Activated CD4-positive, alpha-beta T cell treated with anti-CD3 and anti-CD28 coated beads, Interleukin-2, amount 10 ng/mL, durations not matched to agents 24 days and 14 days (primary cell): ENCODE measurements at regions of chr20 and their contacts with region 1.

Region 1: DNA sequence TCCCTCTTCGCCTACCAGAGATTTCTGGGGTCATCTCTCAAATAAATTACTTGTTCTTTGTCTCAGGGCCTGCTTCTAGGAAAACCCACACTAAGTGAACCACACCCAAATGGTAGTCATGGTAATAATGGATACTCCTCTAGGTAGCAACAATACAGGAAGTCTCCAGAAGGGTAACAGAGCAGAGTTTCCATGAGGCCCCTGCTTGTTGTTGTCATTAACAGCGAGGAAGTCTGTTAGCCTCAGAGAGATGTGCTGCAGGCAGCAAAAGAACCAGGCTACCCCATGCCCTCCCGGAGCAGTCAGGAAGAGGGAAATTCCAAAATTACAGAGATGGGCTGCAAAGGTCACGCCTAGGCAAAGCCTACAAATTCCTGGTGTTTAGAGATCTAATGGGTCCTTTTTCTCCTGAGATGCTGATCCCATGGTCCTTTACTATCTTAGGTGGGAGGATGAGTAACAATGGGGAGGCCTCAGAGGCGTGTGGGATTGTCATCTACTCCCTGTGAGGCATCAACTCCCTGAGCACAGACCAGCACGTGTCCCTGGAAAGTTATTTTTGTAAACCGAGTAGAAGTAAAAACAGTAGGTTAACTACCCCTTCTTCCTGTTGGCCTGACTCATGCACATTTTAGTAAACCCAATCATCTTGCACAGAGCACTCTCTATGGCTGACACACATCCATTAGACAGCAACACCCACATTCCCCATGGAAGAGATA is 10.1 kb downstream of the ISM1 start:
- DNase-seq: peak; percentile 90
- H3K4me3 Mint-ChIP-seq: peak overlapping the region; percentile 25
- H3K27ac Mint-ChIP-seq: peak overlapping the region; percentile 94
- H3K4me1 Mint-ChIP-seq: peaks cover 37% of the 10 kb centered on the region
- H3K27me3 Mint-ChIP-seq: peaks cover 5% of the 10 kb centered on the region

Region 2: GRCh38 chr20:13243826-13244376 is 12.7 kb after region 1 on chr20:
- intact Hi-C with region 1: loop called (anchors 1 kb)
- DNase-seq: no peak
- H3K4me3 Mint-ChIP-seq: no peak overlapping the region
- H3K27ac Mint-ChIP-seq: no peak overlapping the region
- H3K4me1 Mint-ChIP-seq: peaks cover 33% of the 10 kb centered on the region
- H3K27me3 Mint-ChIP-seq: no peaks in the 10 kb centered on the region

Region 3: GRCh38 chr20:13312300-13312699 is 81.1 kb after region 1 on chr20:
- intact Hi-C with region 1: loop called (anchors 5 kb)
- DNase-seq: no peak
- H3K4me3 Mint-ChIP-seq: no peak overlapping the region
- H3K27ac Mint-ChIP-seq: peak overlapping the region; percentile 14
- H3K4me1 Mint-ChIP-seq: peaks cover 16% of the 10 kb centered on the region
- H3K27me3 Mint-ChIP-seq: peaks cover 4% of the 10 kb centered on the region

Region 4: GRCh38 chr20:13430346-13431002 is 199.3 kb after region 1 on chr20:
- intact Hi-C with region 1: loop called (anchors 1 kb)
- DNase-seq: peak; percentile 74
- H3K4me3 Mint-ChIP-seq: peak overlapping the region; percentile 36
- H3K27ac Mint-ChIP-seq: peak overlapping the region; percentile 91
- H3K4me1 Mint-ChIP-seq: peaks cover 23% of the 10 kb centered on the region
- H3K27me3 Mint-ChIP-seq: no peaks in the 10 kb centered on the region

Region 5: DNA sequence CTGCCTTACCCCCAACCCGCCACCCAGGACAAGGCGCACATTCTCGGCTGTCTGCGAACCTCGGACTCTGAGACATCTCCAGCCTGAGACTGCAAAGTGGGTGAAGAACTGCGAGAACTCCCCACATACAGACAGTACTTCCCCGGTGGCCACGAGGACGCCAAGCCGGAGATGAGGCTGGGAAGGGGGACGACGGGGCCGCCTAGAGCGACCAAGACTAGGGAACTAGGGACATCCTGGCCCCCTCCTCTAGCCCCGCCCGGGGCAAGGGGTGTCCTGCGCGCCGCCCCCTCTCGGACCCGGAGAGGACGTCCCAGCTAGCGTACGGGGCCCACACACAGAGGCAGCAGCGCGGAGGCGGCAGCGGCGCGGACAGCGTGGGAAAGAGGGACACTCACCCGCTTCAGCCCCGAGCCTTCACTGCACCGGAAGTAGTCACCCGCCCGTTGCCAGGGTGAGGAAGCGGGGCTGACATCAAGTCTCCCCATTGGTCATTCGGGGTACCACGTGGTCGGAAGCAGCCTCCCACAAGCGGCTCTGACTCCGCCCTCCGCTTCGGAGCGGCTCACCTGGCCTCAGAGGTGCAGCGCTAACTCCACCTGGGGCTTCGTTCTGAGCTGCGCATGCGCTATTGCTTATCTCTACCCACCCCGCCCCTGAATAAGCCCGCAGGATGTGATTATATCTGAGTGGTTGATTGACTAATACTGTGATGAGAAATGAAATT is 407.5 kb after region 1 on chr20 and contains the start of gene TASP1:
- intact Hi-C with region 1: loop called (anchors 5 kb)
- DNase-seq: peak; percentile 98
- H3K4me3 Mint-ChIP-seq: peak within 1 kb of the TSS; percentile 99
- H3K27ac Mint-ChIP-seq: peak within 1 kb of the TSS; percentile 85
- H3K4me1 Mint-ChIP-seq: peaks cover 20% of the 10 kb centered on the region
- H3K27me3 Mint-ChIP-seq: peaks cover 3% of the 10 kb centered on the region
- total RNA-seq, gene TASP1: 14.6 and 14.9 TPM in 2 replicates